Activated B cell treated with CpG ODN at 0.5 μM for 24 hours (primary cell): ENCODE measurements at regions of chr1 and their contacts with region 1.

Region 1: GRCh38 chr1:160489513-160490261 is 33.4 kb downstream of the SLAMF6 start:
- DNase-seq: no peak
- ATAC-seq: peak; percentile 8
- H3K4me3 Mint-ChIP-seq: peak overlapping the region; percentile 49
- H3K27ac Mint-ChIP-seq: no peak overlapping the region
- H3K4me1 Mint-ChIP-seq: peaks cover 3% of the 10 kb centered on the region
- H3K27me3 Mint-ChIP-seq: no peaks in the 10 kb centered on the region
- CTCF ChIP-seq: no peak

Region 2: DNA sequence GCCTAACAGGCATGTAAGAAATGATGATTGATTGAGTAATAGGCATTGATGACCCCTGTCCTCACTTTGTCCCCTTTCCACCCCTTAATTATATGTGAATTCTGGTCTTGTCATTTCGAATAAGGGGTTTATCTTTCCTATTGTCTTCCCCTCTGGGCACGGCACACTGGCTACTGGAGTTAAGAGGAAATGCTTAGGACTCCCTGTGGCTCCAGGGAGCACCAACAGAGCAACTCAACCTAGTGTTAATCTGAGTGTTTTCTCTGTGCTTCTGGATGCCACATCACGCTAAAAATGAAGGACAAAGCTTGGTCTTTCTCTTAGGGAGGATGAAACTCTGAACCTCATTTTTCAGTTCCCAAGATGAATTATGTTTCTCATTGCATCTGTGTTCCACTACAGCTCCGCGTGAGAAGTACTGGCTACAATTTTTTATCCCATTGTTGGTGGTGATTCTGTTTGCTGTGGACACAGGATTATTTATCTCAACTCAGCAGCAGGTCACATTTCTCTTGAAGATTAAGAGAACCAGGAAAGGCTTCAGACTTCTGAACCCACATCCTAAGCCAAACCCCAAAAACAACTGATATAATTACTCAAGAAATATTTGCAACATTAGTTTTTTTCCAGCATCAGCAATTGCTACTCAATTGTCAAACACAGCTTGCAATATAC is 1182.2 kb before region 1 on chr1:
- CTCF ChIA-PET with region 1: no interaction called
- POLR2A ChIA-PET with region 1: no interaction called
- intact Hi-C with region 1: no loop called
- DNase-seq: no peak
- ATAC-seq: no peak
- H3K4me3 Mint-ChIP-seq: no peak overlapping the region
- H3K27ac Mint-ChIP-seq: no peak overlapping the region
- H3K4me1 Mint-ChIP-seq: no peaks in the 10 kb centered on the region
- H3K27me3 Mint-ChIP-seq: peaks cover 37% of the 10 kb centered on the region
- CTCF ChIP-seq: no peak

Region 3: GRCh38 chr1:159970932-159971342 is 518.8 kb before region 1 on chr1:
- CTCF ChIA-PET with region 1: no interaction called
- POLR2A ChIA-PET with region 1: no interaction called
- intact Hi-C with region 1: no loop called
- DNase-seq: no peak
- ATAC-seq: no peak
- H3K4me3 Mint-ChIP-seq: no peak overlapping the region
- H3K27ac Mint-ChIP-seq: no peak overlapping the region
- H3K4me1 Mint-ChIP-seq: no peaks in the 10 kb centered on the region
- H3K27me3 Mint-ChIP-seq: peaks cover 20% of the 10 kb centered on the region
- CTCF ChIP-seq: no peak

Region 4: GRCh38 chr1:160342953-160343869 is 146.5 kb before region 1 on chr1 and contains the starts of genes COPA and NCSTN:
- CTCF ChIA-PET with region 1: no interaction called
- POLR2A ChIA-PET with region 1: interaction called, 4 read pairs
- intact Hi-C with region 1: loop called (anchors 10 kb)
- DNase-seq: peak; percentile 83
- ATAC-seq: peak; percentile 88
- H3K4me3 Mint-ChIP-seq: peak within 1 kb of the TSS; percentile 99
- H3K27ac Mint-ChIP-seq: peak within 1 kb of the TSS; percentile 98
- H3K4me1 Mint-ChIP-seq: peaks cover 68% of the 10 kb centered on the region
- H3K27me3 Mint-ChIP-seq: no peaks in the 10 kb centered on the region
- CTCF ChIP-seq: no peak
- total RNA-seq, gene COPA: 161 and 174 TPM in 2 replicates
- total RNA-seq, gene NCSTN: 108 and 118 TPM in 2 replicates

Region 5: GRCh38 chr1:160474392-160475242 is 15.1 kb before region 1 on chr1:
- CTCF ChIA-PET with region 1: interaction called, 7 read pairs
- POLR2A ChIA-PET with region 1: interaction called, 28 read pairs
- intact Hi-C with region 1: loop called (anchors 1 kb)
- DNase-seq: no peak
- ATAC-seq: peak; percentile 95
- H3K4me3 Mint-ChIP-seq: no peak overlapping the region
- H3K27ac Mint-ChIP-seq: no peak overlapping the region
- H3K4me1 Mint-ChIP-seq: peaks cover 16% of the 10 kb centered on the region
- H3K27me3 Mint-ChIP-seq: no peaks in the 10 kb centered on the region
- CTCF ChIP-seq: no peak

Region 6: GRCh38 chr1:160539990-160540858 is 50.5 kb after region 1 on chr1:
- CTCF ChIA-PET with region 1: interaction called, 7 read pairs
- POLR2A ChIA-PET with region 1: interaction called, 11 read pairs
- intact Hi-C with region 1: no loop called
- DNase-seq: no peak
- ATAC-seq: peak; percentile 95
- H3K4me3 Mint-ChIP-seq: peak overlapping the region; percentile 56
- H3K27ac Mint-ChIP-seq: peak overlapping the region; percentile 96
- H3K4me1 Mint-ChIP-seq: peaks cover 58% of the 10 kb centered on the region
- H3K27me3 Mint-ChIP-seq: no peaks in the 10 kb centered on the region
- CTCF ChIP-seq: no peak

Region 7: DNA sequence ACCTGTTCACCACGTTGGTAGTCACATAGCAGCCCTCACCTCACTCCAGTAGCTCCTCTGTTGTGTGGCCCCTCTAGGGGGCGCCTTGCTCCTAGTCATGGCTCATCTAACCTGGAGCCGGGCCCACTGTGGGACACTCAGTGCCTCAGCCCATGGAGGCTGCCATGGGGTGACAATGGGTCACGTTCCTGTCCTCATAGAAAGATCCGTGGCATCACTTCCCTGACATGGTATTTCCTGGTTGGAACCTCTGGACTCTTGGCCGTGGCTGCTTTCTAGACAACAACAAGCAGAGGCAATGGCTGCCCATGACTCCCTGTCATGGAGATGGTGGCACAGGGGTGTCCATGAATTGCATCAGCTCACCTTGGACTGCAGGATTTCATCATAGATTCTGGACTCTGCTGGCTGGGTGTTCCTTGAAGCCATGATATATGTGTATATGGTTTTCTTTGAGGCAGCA is 60.9 kb after region 1 on chr1:
- CTCF ChIA-PET with region 1: interaction called, 3 read pairs
- POLR2A ChIA-PET with region 1: interaction called, 22 read pairs
- intact Hi-C with region 1: loop called (anchors 2 kb)
- DNase-seq: no peak
- ATAC-seq: no peak
- H3K4me3 Mint-ChIP-seq: no peak overlapping the region
- H3K27ac Mint-ChIP-seq: peak overlapping the region; percentile 90
- H3K4me1 Mint-ChIP-seq: peaks cover 86% of the 10 kb centered on the region
- H3K27me3 Mint-ChIP-seq: no peaks in the 10 kb centered on the region
- CTCF ChIP-seq: no peak